Activated naive CD4-positive, alpha-beta T cell treated with anti-CD3 and anti-CD28 coated beads for 36 hours (primary cell): ENCODE measurements at regions of chr2 and their contacts with region 1.

Region 1: DNA sequence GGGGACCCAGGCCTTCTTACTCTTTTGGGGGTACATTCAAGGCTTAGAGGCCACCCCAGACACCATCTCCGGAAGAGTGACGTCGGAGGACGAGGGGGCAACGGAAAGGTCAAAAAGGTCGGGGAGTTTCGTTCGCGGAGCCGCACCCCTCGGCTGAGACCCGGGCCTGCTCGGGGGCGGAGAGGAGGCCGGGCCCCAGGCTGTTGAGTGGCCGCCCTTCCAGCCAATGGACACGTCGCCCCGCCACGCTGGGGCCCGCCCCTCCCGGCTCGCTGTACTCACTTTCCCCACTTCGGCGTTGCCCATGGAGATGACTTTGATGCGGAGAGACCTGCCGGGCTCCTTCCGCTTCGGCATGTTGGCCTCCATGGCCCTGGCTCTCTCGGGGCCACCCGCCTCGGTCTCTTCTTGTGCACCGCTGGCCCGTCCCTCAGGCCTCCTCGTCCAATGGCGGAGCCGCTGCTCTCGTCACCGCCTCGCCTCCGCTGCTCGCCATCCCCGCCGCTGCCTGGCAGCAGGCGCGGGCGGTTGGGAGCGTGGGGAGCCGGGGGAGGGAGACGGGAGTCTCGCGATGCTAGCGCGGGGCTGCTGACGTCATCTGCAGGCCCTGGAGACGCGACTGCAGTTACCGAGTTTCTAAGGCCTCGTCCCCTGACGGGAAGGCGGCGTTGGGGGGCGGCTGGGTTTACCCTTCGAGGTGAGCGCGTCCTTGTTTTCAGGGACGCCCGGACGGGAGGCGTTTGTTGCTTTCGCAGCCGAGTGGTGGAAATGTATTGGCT is at the start of gene DNAJC27:
- DNase-seq: peak; percentile 98
- H3K4me3 Mint-ChIP-seq: peak within 1 kb of the TSS; percentile 99
- H3K27ac Mint-ChIP-seq: peak within 1 kb of the TSS; percentile 100
- H3K4me1 Mint-ChIP-seq: peaks cover 20% of the 10 kb centered on the region
- H3K27me3 Mint-ChIP-seq: no peaks in the 10 kb centered on the region
- total RNA-seq, gene DNAJC27: 5.3 to 6.0 TPM

Region 2: GRCh38 chr2:24409700-24410556 is 561.8 kb before region 1 on chr2:
- CTCF ChIA-PET with region 1: no interaction called
- intact Hi-C with region 1: loop called (anchors 2 kb)
- DNase-seq: peak; percentile 56
- H3K4me3 Mint-ChIP-seq: no peak overlapping the region
- H3K27ac Mint-ChIP-seq: no peak overlapping the region
- H3K4me1 Mint-ChIP-seq: no peaks in the 10 kb centered on the region
- H3K27me3 Mint-ChIP-seq: peaks cover 4% of the 10 kb centered on the region

Region 3: GRCh38 chr2:24827321-24828237 is 144.1 kb before region 1 on chr2:
- CTCF ChIA-PET with region 1: no interaction called
- intact Hi-C with region 1: loop called (anchors 5 kb)
- DNase-seq: peak; percentile 85
- H3K4me3 Mint-ChIP-seq: no peak overlapping the region
- H3K27ac Mint-ChIP-seq: no peak overlapping the region
- H3K4me1 Mint-ChIP-seq: peaks cover 17% of the 10 kb centered on the region
- H3K27me3 Mint-ChIP-seq: no peaks in the 10 kb centered on the region

Region 4: GRCh38 chr2:25098670-25099486 is 127.2 kb after region 1 on chr2:
- CTCF ChIA-PET with region 1: interaction called, 13 read pairs
- intact Hi-C with region 1: no loop called
- DNase-seq: no peak
- H3K4me3 Mint-ChIP-seq: no peak overlapping the region
- H3K27ac Mint-ChIP-seq: no peak overlapping the region
- H3K4me1 Mint-ChIP-seq: peaks cover 17% of the 10 kb centered on the region
- H3K27me3 Mint-ChIP-seq: peaks cover 3% of the 10 kb centered on the region

Region 5: GRCh38 chr2:25204190-25204838 is 232.6 kb after region 1 on chr2:
- CTCF ChIA-PET with region 1: no interaction called
- intact Hi-C with region 1: no loop called
- DNase-seq: no peak
- H3K4me3 Mint-ChIP-seq: no peak overlapping the region
- H3K27ac Mint-ChIP-seq: no peak overlapping the region
- H3K4me1 Mint-ChIP-seq: peaks cover 15% of the 10 kb centered on the region
- H3K27me3 Mint-ChIP-seq: no peaks in the 10 kb centered on the region

Region 6: DNA sequence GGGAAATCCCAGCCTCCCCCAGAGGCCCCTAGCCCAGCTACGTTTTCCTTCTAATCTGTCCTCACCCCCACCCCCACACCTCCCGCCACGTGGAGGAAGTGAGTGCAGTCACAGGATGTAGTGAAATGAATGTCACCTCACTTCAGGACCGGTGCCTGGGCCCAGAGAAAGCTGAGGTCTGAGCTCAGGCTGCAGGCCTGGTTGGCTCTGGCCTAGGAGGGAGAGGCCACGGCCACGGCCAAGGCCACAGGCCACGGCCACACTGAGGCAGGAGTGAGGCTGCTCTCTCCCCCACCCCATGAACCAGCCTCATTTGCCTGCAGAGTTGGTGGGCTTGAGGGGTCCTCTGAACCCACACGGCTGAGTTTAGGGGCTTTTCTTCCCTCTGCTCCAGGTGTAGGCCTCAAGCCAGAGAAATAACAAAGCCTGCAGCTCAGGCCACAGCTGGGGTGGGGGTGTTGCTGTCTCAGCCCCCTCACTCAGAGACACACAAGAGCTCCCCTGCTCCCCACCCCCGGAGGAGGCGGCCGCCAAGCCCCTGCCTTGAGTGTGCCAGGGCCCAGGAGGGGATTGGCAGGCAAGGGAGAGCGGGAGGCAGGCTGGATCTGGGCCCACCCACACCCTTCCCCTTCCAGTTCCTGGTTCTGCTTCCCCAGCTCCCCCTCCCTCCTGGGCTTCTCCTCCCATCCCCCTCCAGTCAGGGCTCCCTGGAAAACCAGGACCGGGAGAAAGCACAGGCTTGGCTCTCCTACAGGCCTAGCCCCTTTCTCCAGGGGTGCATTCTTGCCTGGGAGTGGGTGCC is 343.0 kb after region 1 on chr2:
- CTCF ChIA-PET with region 1: no interaction called
- intact Hi-C with region 1: loop called (anchors 10 kb)
- DNase-seq: peak; percentile 98
- H3K4me3 Mint-ChIP-seq: peak overlapping the region; percentile 92
- H3K27ac Mint-ChIP-seq: peak overlapping the region; percentile 97
- H3K4me1 Mint-ChIP-seq: peaks cover 64% of the 10 kb centered on the region
- H3K27me3 Mint-ChIP-seq: no peaks in the 10 kb centered on the region

Region 7: DNA sequence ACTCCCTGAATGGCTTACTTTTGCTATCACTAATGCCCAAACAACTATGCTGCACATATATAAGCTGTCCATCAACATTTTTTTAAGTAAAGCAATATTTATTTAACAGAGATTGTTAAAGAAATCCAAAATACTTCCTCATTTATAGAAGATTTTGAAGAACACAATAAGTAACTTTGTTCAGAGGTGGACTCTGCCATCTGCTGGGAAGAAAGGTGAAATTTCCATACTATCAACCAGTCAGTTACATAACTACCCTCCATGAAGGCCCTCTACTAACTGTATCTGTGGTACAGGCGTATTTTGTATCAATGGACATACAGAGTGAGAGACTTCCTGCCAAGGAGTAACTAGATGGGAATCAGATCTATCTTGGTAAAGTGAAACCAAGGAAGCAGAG is 595.7 kb after region 1 on chr2:
- CTCF ChIA-PET with region 1: no interaction called
- intact Hi-C with region 1: loop called (anchors 10 kb)
- DNase-seq: peak; percentile 44
- H3K4me3 Mint-ChIP-seq: no peak overlapping the region
- H3K27ac Mint-ChIP-seq: no peak overlapping the region
- H3K4me1 Mint-ChIP-seq: no peaks in the 10 kb centered on the region
- H3K27me3 Mint-ChIP-seq: no peaks in the 10 kb centered on the region